Sciatic nerve (tissue), 2 donors: ENCODE measurements at regions of chr21 and their contacts with region 1.

Region 1: DNA sequence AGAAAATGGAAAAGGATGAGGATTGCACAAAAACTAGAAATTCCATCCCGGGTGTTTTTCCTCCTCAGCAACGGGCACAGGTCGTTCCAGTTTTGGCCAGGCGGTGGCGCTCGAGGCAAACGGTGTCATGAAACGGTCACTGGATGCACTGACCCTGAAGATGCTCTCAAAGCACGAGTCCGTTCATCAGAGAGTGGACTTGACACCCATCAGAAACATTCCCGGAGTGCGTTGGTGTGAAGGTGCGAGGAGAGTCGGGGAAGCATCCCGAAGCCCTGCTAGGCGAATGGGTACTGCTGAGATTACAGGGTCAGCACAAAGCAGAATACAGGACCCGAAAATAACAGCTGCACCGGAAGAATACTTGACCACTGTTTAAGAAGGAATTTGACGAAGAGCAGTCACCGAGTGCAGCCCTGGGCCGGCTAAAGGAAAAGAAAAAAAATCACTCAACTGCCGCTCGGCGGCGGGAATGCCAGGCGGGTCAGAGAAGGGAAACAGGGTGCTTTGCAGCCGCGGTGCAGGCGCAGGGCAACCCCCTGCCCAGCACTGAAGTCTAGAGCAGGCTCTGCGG is 71.7 kb upstream of the ETS2 start:
- DNase-seq: peak; percentile 96
- ATAC-seq: peak; percentile 94

Region 2: DNA sequence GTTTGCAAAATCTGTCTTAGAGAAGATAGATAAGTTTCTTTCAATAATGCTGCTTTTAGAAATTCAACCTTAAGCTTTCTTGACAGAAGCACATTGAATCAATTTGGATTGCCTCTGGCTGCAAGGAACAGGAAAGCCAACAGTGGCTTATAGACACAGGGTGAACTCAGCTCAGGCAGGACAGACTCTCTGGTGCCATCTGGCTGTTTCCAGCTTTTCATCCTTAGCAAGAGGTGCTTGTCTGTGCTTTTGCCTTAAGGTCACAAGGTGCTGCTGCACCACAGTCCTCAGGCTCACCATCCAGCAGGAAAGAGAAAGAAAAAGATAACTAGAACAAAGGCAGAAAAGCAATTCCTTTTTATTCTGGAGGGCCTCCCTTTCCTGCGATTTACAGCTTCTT is 22.0 kb before region 1 on chr21:
- intact Hi-C with region 1: no loop called
- DNase-seq: no peak
- ATAC-seq: no peak

Region 3: GRCh38 chr21:39137248-39138178 is 403.5 kb after region 1 on chr21:
- intact Hi-C with region 1: loop called (anchors 10 kb)
- DNase-seq: no peak
- ATAC-seq: peak; percentile 76